Mammary epithelial cell (primary cell): ENCODE measurements at regions of chr9 and their contacts with region 1.

Region 1: DNA sequence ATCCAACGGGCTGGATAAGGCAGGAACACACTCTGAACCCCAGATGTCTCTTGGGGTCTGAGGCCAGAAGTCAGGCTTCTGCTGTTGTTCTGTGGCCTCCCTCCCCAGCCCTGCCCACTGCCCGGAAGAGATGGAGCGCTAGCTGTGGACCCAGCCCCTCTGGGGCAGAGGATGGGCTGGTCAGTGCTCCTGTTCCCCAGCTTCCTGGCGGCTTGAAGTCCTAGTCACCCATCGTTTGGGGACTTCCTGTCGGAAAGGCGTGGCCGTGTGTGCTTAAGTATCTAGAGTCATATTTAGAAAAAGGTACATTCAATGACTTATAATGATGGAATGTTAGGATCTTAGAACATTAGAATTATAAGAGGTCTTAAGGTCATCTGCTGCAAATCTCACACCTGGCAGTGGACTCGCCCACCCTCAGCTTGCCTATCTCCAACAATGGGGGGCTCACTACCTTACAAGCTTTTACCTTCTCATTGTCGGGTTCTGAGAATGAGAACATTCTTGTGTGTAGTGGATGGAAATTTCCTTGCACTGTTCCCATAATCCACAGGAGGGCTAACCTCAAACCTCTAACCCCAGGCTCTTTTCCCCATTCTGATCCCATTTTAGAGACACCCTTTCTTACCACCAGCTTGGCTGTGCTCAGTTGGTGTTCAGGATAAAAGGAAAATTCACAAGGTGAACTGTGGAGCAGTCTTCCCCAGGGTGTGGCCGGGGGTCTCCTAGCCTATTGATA is 13.4 kb upstream of the AIF1L start:
- DNase-seq: no peak
- H3K4me3 ChIP-seq: no peak overlapping the region
- H3K27ac ChIP-seq: no peak overlapping the region
- H3K4me1 ChIP-seq: peaks cover 4% of the 10 kb centered on the region
- H3K27me3 ChIP-seq: peaks cover 3% of the 10 kb centered on the region
- CTCF ChIP-seq: no peak

Region 2: GRCh38 chr9:130927995-130928900 is 154.7 kb before region 1 on chr9:
- CTCF ChIA-PET with region 1: no interaction called
- dilution Hi-C with region 1: no loop called
- in situ Hi-C with region 1: no loop called
- intact Hi-C with region 1: no loop called
- DNase-seq: peak; percentile 91
- H3K4me3 ChIP-seq: no peak overlapping the region
- H3K27ac ChIP-seq: peak overlapping the region; percentile 69
- H3K4me1 ChIP-seq: peaks cover 28% of the 10 kb centered on the region
- H3K27me3 ChIP-seq: no peaks in the 10 kb centered on the region
- CTCF ChIP-seq: no peak

Region 3: DNA sequence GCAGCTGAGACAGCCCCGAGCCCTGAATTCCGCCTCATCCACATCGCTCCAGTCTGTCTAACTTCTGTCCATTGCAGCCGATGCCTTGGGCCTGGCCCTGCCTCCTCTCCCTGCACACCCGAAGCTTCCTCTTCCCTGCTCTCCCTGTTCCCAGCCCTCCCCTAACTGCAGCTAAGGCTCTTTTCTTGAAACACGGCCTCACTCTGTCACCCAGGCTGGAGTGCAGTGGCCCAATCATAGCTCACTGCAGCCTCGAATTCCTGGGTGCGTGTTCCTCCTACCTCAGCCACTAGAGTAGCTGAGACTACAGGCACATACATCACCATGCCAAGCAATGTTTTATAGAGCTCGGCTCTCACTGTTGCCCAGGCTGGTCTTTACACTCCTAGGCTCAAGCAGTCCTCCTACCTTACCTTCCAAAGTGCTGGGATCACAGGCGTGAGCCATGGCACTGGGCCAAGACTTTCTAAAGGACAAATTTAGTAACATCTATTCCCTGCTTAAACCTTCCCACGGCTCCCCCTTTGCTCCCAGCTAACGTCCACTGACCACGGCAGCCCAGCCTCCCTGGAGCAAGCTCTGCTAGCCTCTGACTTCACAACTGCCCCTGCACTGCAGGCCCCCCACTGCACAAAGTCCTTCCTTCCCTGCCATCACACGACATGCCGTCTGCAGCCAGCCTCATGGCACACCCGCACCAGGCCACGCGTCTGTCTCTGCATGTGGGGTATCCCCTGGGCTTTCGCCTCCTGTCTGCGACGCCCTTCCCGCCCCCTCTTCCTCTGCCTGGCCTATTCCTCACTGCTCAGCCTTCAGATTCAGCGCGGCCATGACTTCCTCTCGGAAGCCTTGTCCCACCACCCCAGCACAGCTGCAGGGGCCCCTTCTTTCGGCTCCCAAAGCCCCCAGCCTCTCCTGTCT is 45.3 kb before region 1 on chr9:
- CTCF ChIA-PET with region 1: no interaction called
- dilution Hi-C with region 1: loop called (anchors 5 kb)
- in situ Hi-C with region 1: no loop called
- intact Hi-C with region 1: no loop called
- DNase-seq: no peak
- H3K4me3 ChIP-seq: no peak overlapping the region
- H3K27ac ChIP-seq: no peak overlapping the region
- H3K4me1 ChIP-seq: no peaks in the 10 kb centered on the region
- H3K27me3 ChIP-seq: no peaks in the 10 kb centered on the region
- CTCF ChIP-seq: no peak

Region 4: DNA sequence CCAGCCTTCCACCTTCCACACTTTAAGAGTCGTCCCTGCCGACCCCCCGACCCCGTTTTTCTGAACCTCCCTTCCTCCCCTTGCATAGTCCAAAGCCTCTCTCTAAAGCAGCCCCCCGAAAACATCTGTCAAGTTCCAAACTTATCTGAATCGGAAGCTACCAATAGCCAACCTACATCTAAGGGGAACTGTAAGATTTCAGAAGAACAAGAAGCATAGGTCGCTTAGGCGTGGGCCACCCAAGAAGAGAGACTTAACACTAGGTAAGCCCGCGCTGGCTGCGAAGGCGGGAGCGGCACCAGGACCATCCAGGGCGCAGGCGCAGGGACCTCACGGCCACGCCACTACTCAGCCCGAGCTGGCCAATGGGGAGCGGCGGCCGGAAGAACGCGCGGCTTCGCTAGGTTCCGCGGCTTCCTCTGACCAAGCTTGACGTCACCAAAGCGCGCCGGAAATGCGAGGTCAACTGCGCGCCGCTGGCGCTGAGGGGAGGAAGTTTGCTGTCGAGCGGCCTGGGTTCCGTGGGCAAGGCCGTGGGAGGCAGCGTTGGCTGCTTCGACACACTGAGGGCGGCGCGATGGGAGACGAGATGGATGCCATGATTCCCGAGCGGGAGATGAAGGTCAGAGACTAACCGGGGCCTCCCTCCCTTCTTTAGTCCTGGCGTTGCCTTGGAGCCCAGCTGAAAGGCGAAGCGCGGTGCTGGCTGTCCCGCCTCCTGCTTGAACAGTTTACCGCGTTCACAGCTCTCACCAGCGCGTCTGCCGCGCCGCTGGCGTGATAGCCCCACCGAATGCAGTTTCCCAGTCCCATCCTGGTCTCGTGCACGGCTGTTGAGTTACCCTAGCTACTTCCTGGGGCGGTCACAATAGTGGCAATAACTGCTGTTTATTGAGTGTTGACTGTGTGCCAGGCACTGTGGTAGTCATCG is 42.5 kb after region 1 on chr9 and contains the start of gene NUP214:
- CTCF ChIA-PET with region 1: no interaction called
- dilution Hi-C with region 1: loop called (anchors 5 kb)
- in situ Hi-C with region 1: no loop called
- intact Hi-C with region 1: no loop called
- DNase-seq: peak; percentile 98
- H3K4me3 ChIP-seq: peak within 1 kb of the TSS; percentile 54 to 83 (median 80)
- H3K27ac ChIP-seq: peak within 1 kb of the TSS; percentile 69
- H3K4me1 ChIP-seq: peaks cover 9% of the 10 kb centered on the region
- H3K27me3 ChIP-seq: no peaks in the 10 kb centered on the region
- CTCF ChIP-seq: no peak
- total RNA-seq, gene NUP214: 17.2 to 42.5 TPM